ENCODE measurements at regions of chr10 and their contacts with region 1.

Region 1: GRCh38 chr10:76303682-76304316 is 872.4 kb downstream of the LRMDA start:
- DNase-seq: peak; percentile 27
- ATAC-seq: peak; percentile 90
- H3K4me3 ChIP-seq: no peak overlapping the region
- H3K27ac ChIP-seq: no peak overlapping the region
- H3K4me1 ChIP-seq: no peaks in the 10 kb centered on the region
- H3K27me3 ChIP-seq: peaks cover 7% of the 10 kb centered on the region; the same call in 1 of the 2 replicates
- CTCF ChIP-seq: peak; percentile 64

Region 2: DNA sequence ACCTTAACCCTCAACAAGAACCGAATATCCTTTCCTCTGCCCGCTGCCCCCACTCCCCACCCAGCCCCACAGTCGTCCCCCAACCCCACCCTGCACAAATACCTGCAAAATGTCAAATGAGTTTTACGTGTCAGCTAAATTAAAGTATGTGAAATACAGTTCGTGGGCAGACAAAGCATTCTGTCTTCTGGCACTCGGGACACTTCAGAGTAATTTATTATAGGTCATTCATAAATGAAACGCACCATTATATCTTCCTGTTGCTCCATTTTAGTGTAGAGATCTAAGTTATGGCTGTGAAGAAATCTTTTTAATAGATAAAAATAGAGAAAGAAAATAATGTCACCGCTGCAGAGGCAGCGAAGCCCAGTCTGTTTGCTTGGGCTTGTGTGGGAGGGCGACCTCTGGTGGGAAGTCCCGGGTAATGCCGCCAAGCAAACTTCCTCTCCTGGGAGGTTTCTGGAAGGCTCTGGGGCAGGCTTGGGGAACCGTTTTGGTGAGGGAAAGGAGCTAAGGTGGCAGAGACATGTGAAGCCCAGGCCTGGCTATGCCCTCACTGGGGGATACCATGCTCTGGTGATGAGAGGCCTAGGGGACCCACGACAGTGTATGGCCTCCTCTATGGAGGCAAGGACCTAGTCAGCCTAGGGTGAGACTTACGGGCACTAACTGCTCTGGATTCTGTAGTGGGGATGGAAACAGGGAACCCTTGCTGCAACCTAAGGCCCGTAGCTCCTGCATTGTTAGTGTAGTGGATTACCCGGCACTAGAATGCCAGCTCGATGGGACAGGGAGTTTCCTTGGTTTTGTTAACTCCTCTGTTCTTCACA is 267.5 kb before region 1 on chr10:
- CTCF ChIA-PET with region 1: no interaction called
- POLR2A ChIA-PET with region 1: no interaction called
- in situ Hi-C with region 1: no loop called
- intact Hi-C with region 1: loop called (anchors 10 kb)
- DNase-seq: peak; percentile 28
- ATAC-seq: peak; percentile 97
- H3K4me3 ChIP-seq: no peak overlapping the region
- H3K27ac ChIP-seq: no peak overlapping the region
- H3K4me1 ChIP-seq: no peaks in the 10 kb centered on the region
- H3K27me3 ChIP-seq: no peaks in the 10 kb centered on the region
- CTCF ChIP-seq: peak; percentile 98

Region 3: DNA sequence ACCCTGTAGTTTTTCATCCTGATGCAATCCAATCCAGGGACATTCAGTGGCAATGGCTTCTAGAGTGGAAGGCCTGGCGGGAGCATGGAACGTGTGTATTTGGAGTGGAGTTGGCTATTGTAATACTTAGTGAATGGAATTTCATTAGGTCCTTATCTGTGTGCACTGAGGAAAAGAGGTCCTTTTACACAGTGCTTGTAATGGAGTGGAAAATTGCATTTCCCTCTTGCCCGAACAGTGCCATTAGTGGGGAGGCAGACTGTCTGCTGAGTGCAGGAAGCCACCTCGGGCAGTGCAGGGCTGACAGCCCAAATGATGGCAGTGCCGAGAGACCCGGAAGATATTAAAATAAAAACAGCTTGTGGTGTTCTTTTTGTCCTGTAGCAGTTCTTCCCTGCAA is 85.8 kb before region 1 on chr10:
- CTCF ChIA-PET with region 1: no interaction called
- POLR2A ChIA-PET with region 1: no interaction called
- in situ Hi-C with region 1: no loop called
- intact Hi-C with region 1: no loop called
- DNase-seq: no peak
- ATAC-seq: no peak
- H3K4me3 ChIP-seq: no peak overlapping the region
- H3K27ac ChIP-seq: no peak overlapping the region
- H3K4me1 ChIP-seq: no peaks in the 10 kb centered on the region
- H3K27me3 ChIP-seq: no peaks in the 10 kb centered on the region
- CTCF ChIP-seq: no peak

Region 4: DNA sequence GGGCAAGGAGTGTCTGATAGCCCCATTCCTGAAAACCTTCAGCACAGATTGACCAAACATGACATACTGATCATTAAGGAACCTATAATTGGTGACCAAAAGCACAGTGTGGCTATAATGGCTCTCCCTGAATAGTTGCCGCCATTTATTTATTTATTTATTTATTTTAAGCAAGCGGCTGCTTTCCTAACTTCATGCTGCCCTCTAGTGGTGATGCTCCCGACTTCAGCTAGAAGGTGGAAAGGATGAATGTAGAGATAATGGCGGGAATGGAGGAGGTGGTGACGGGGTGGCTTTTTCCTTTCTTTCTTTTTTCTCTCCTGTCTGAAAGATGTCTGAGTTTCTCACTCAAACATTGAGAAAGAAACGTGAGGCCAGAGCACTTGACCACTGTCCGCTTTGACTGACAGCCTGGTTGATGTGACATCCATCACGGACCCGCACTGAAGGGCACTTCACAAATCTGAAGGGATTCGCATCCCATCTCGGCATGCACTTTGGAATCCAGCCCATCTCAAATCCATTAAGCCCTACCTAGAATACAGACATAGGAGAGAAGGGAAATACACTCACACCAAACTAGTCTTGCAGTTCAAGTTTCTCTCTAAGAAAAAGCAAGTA is 243.7 kb after region 1 on chr10:
- CTCF ChIA-PET with region 1: no interaction called
- POLR2A ChIA-PET with region 1: no interaction called
- in situ Hi-C with region 1: no loop called
- intact Hi-C with region 1: loop called (anchors 10 kb)
- DNase-seq: peak; percentile 38
- ATAC-seq: peak; percentile 81
- H3K4me3 ChIP-seq: no peak overlapping the region
- H3K27ac ChIP-seq: no peak overlapping the region
- H3K4me1 ChIP-seq: no peaks in the 10 kb centered on the region
- H3K27me3 ChIP-seq: peaks cover 11% of the 10 kb centered on the region
- CTCF ChIP-seq: peak; percentile 90

Measured in Panc1 (cell line).